Calu3 (cell line): ENCODE measurements at regions of chr2 and their contacts with region 1.

Region 1: GRCh38 chr2:17830053-17831034 is 14.1 kb downstream of the MSGN1 start:
- DNase-seq: peak; percentile 86
- H3K4me3 Mint-ChIP-seq: peak overlapping the region; percentile 53
- H3K27ac Mint-ChIP-seq: no peak overlapping the region
- H3K4me1 Mint-ChIP-seq: peaks cover 7% of the 10 kb centered on the region
- H3K27me3 Mint-ChIP-seq: peaks cover 43% of the 10 kb centered on the region
- CTCF ChIP-seq: peak; percentile 84

Region 2: GRCh38 chr2:17719562-17720371 is 110.6 kb before region 1 on chr2:
- CTCF ChIA-PET with region 1: no interaction called
- intact Hi-C with region 1: loop called (anchors 2 kb)
- DNase-seq: no peak
- H3K4me3 Mint-ChIP-seq: no peak overlapping the region
- H3K27ac Mint-ChIP-seq: no peak overlapping the region
- H3K4me1 Mint-ChIP-seq: no peaks in the 10 kb centered on the region
- H3K27me3 Mint-ChIP-seq: no peaks in the 10 kb centered on the region
- CTCF ChIP-seq: peak; percentile 57

Region 3: GRCh38 chr2:17934721-17935120 is 104.4 kb after region 1 on chr2:
- CTCF ChIA-PET with region 1: no interaction called
- intact Hi-C with region 1: no loop called
- DNase-seq: no peak
- H3K4me3 Mint-ChIP-seq: no peak overlapping the region
- H3K27ac Mint-ChIP-seq: no peak overlapping the region
- H3K4me1 Mint-ChIP-seq: peaks cover 8% of the 10 kb centered on the region
- H3K27me3 Mint-ChIP-seq: no peaks in the 10 kb centered on the region
- CTCF ChIP-seq: no peak